ENCODE measurements at regions of chr13 and their contacts with region 1.

Region 1: DNA sequence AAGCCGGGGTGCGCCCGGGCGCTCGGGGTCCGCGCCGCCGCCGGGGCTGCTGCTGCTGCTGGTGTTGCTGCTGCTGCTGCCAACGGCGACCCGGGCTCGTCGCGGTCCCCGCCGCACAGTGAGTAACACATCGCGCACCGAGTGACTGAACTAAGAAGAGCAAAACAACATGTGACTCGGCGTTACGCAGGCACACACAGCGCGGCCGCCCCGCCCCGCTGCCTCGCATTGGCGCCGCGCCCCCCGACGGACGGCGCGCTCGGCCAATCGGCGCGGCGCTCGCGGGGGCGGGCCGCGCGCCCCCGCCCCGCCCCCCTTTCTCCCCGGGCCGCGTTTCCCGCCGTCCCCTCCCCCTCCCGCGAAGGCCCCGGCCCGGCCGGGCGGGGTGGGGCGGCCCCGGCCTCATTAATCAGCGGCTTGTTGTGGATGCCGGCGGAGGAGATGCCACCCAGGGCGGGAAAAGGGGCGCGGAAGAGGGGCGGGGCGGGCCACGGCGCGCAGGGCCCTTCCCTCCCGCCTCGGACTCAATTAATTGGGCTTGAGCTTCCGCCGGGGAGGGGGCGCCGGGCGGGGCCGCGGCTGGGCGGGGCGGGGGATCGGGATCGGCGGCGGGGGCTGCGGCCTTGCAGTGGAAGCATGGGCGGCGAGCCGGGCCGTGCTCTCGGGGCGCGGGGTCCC is at the start of gene IRS2:
- DNase-seq: peak; percentile 94 to 95
- ATAC-seq: peak; percentile 83 to 87
- H3K4me3 ChIP-seq: peak within 1 kb of the TSS; percentile 74 to 86 (median 82)
- H3K27ac ChIP-seq: peak within 1 kb of the TSS; percentile 85 to 94 (median 89)
- H3K4me1 ChIP-seq: peaks cover 0 to 21% of the 10 kb centered on the region in 2 donors
- H3K27me3 ChIP-seq: peaks cover 0 to 3% (median 0%) of the 10 kb centered on the region in 3 donors
- CTCF ChIP-seq: no peak
- POLR2A ChIP-seq: peak; percentile 99
- total RNA-seq, gene IRS2: 23.8 to 65.6 (median 28.7) TPM

Region 2: DNA sequence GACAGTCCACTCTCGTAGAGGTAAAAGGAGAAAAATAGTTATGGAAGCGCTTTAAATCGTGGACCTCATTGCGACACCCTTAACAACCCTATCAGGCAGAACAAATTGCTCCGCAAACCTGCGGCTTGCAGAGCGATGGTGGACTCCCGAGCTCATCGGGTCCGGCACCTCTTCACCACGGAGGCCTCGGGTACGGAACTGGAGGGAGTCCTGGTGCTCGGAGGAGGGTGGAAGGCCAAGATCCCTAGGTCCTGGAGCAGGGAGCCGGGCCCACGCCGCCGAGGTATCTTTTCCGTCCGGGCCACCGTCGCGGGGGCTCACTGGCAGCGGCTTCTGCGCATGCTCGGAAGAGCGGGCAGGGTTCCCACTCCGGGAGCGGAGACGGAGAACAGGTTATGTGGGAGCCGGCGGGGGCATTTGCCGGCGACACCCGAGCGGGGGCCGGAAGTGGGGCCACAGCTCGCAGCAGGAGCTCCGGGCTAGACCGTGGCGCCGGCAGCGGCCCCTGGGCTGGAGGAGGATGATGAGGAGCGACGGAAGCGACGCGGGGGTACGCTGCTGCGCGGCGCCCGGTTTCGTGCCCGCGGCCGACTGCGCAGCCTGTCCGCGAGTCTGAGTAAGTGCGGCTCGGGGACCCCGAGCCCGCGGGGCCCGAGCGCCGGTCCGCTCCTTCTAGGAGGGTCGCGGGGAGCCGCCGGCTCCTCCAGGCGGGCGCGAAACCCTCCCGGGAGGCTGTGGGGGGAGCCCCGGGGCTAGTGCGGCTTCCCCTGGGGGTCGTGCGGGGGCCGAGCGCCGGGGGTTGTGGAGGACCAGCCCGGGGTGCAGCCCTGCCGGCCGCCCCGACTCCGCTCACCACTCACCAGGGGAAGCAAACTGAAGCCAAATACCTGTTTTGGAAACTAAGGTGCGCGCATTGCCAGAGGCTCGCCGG is 1568.3 kb before region 1 on chr13 and contains the start of gene ABHD13:
- in situ Hi-C with region 1: loop called in 1 of 4 experiments (anchors 25 kb)
- intact Hi-C with region 1: loop called (anchors 10 kb)
- DNase-seq: peak; percentile 71 to 86
- ATAC-seq: peak; percentile 86 to 88
- H3K4me3 ChIP-seq: peak within 1 kb of the TSS; percentile 89 to 96 (median 92)
- H3K27ac ChIP-seq: peak within 1 kb of the TSS; percentile 83 to 97 (median 92)
- H3K4me1 ChIP-seq: peaks cover 52 to 55% of the 10 kb centered on the region in 2 donors
- H3K27me3 ChIP-seq: no peaks in the 10 kb centered on the region
- CTCF ChIP-seq: peak in 1 of 5 experiments; percentile 3
- POLR2A ChIP-seq: peak; percentile 68 to 80
- total RNA-seq, gene ABHD13: 4.8 to 15.5 (median 6.9) TPM

Region 3: DNA sequence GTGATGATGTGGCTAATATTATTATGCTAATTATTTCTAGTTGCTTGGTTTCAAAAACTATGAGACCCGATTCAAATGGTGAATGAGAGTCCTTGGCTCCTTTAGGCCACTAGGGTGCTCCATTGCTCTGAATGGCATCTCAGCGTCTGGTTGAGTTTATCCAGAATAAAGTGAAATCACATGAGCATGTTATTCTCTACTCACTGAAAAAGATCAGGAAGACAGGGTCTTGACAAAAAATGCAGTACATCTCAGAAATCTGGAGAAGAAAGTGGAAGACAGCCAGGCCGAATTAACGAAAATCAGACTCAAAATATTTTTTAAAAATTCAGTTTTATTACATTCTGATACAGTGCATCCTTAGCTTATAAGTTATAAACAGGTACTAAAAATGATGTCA is 641.0 kb before region 1 on chr13:
- in situ Hi-C with region 1: loop called in 1 of 4 experiments (anchors 25 kb)
- intact Hi-C with region 1: loop called (anchors 2 kb)
- DNase-seq: peak in 1 of 2 donors; percentile 10
- ATAC-seq: peak; percentile 80 to 83
- H3K4me3 ChIP-seq: no peak overlapping the region
- H3K27ac ChIP-seq: no peak overlapping the region
- H3K4me1 ChIP-seq: no peaks in the 10 kb centered on the region
- H3K27me3 ChIP-seq: peaks cover 6 to 14% (median 9%) of the 10 kb centered on the region in 3 donors
- CTCF ChIP-seq: peak; percentile 47 to 65 (median 61)
- POLR2A ChIP-seq: no peak

Region 4: DNA sequence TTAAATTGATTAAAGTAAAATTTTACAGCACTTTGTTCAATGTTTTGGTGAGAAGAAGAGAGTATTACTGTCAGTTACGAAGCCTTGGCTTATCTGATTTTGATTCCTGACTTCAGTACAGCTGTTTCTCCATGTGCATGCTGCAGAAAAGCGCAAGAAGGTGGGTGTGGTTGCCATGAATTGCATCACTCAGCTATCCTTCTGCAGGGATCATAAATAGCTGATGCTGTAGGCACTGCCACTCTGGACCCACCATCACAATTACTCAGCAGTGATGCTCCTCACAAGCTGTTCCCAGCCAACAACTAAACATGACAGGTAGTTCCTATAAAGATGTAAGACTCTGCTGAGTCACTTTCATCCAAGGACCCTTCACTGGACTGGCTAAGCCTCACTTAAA is 321.4 kb before region 1 on chr13:
- in situ Hi-C with region 1: no loop called
- intact Hi-C with region 1: no loop called
- DNase-seq: no peak
- ATAC-seq: no peak
- H3K4me3 ChIP-seq: no peak overlapping the region
- H3K27ac ChIP-seq: no peak overlapping the region
- H3K4me1 ChIP-seq: no peaks in the 10 kb centered on the region
- H3K27me3 ChIP-seq: no peaks in the 10 kb centered on the region
- CTCF ChIP-seq: no peak
- POLR2A ChIP-seq: no peak

Region 5: DNA sequence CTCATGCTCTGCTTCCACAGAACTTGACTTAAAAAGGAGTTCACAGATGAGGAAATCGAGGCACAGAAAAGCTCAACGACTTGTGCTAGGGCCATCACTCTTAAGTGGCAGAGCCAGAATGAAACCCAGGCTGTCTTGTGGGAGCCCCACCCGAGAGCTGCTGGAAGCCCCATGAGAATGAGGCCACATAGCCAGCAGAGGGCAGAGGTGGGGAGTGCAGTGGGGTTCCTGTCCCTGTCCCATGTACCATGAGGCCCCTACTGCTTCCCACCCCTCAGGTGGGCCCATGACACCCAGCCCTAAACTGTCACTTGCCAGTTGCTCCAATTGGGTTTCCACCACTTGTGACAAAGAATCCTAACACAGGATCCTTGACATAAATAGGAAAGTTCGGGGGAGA is 176.1 kb before region 1 on chr13:
- in situ Hi-C with region 1: no loop called
- intact Hi-C with region 1: loop called (anchors 5 kb)
- DNase-seq: peak in 1 of 2 donors; percentile 25
- ATAC-seq: no peak
- H3K4me3 ChIP-seq: no peak overlapping the region
- H3K27ac ChIP-seq: no peak overlapping the region
- H3K4me1 ChIP-seq: no peaks in the 10 kb centered on the region
- H3K27me3 ChIP-seq: no peaks in the 10 kb centered on the region
- CTCF ChIP-seq: peak in 3 of 5 experiments; percentile 20 to 43 (median 33)
- POLR2A ChIP-seq: no peak

Region 6: DNA sequence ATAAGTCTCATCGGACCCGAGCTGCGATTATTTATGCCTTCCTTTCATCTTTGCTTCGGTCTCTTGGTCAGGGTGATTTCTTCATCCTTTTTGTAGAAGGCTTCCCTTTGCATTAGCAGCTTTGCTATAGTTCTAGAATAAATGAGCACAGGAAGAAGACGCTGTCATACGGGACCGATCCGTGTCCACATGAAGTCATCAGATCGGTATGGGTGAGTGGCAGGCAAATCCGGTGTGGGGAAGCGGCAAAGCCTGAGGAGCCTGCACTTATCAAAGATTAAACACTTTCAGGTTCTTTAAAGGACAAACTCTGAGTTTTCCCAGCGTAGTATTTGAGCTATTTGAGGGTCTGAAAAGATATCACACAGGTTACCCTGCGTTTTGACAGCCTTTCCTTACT is 119.5 kb before region 1 on chr13:
- in situ Hi-C with region 1: no loop called
- intact Hi-C with region 1: no loop called
- DNase-seq: no peak
- ATAC-seq: no peak
- H3K4me3 ChIP-seq: no peak overlapping the region
- H3K27ac ChIP-seq: no peak overlapping the region
- H3K4me1 ChIP-seq: no peaks in the 10 kb centered on the region
- H3K27me3 ChIP-seq: peaks cover 0 to 5% (median 4%) of the 10 kb centered on the region in 3 donors
- CTCF ChIP-seq: no peak
- POLR2A ChIP-seq: no peak

Region 7: DNA sequence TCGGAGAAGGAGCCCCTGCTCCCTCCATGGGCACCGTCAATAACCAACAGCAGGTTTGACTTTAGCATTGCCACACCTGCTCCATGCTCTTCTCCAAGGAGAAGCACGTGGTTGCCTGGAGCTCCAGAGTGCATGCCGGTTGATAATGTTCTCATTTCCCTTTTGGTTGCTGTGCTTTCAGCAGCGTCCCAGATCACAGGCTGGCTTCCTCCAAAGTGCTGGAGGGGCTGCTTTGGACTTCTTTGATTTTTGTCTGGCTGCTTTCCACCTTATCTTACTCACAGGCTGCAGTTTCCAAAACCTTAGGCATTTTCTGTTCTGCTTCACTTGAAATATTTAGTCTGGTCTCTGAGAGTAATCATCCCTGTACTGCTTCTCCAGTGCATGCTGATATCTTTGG is 123.6 kb after region 1 on chr13:
- in situ Hi-C with region 1: no loop called
- intact Hi-C with region 1: no loop called
- DNase-seq: no peak
- ATAC-seq: no peak
- H3K4me3 ChIP-seq: no peak overlapping the region
- H3K27ac ChIP-seq: no peak overlapping the region
- H3K4me1 ChIP-seq: no peaks in the 10 kb centered on the region
- H3K27me3 ChIP-seq: no peaks in the 10 kb centered on the region
- CTCF ChIP-seq: no peak
- POLR2A ChIP-seq: no peak

Region 8: GRCh38 chr13:110116072-110116487 is 329.5 kb after region 1 on chr13:
- in situ Hi-C with region 1: loop called in 2 of 4 experiments (anchors 25 kb)
- intact Hi-C with region 1: no loop called
- DNase-seq: peak in 1 of 2 donors; percentile 63
- ATAC-seq: peak; percentile 38 to 40
- H3K4me3 ChIP-seq: no peak overlapping the region
- H3K27ac ChIP-seq: no peak overlapping the region
- H3K4me1 ChIP-seq: peaks cover 6 to 12% of the 10 kb centered on the region in 2 donors
- H3K27me3 ChIP-seq: peaks cover 0 to 2% (median 0%) of the 10 kb centered on the region in 3 donors
- CTCF ChIP-seq: peak; percentile 66 to 84 (median 78)
- POLR2A ChIP-seq: no peak

Region 9: GRCh38 chr13:110715395-110716235 is 929.0 kb after region 1 on chr13:
- in situ Hi-C with region 1: no loop called
- intact Hi-C with region 1: loop called (anchors 5 kb)
- DNase-seq: peak; percentile 99
- ATAC-seq: peak; percentile 65 to 72
- H3K4me3 ChIP-seq: peak overlapping the region; percentile 85 to 98 (median 94)
- H3K27ac ChIP-seq: peak overlapping the region; percentile 97 to 100 (median 100)
- H3K4me1 ChIP-seq: peaks cover 25 to 30% of the 10 kb centered on the region in 2 donors
- H3K27me3 ChIP-seq: no peaks in the 10 kb centered on the region
- CTCF ChIP-seq: peak in 3 of 5 experiments; percentile 5 to 33 (median 30)
- POLR2A ChIP-seq: peak; percentile 76

Measured in gastrocnemius medialis (tissue), 4 donors.